Endothelial cell of umbilical vein (primary cell): ENCODE measurements at regions of chr1 and their contacts with region 1.

Region 1: DNA sequence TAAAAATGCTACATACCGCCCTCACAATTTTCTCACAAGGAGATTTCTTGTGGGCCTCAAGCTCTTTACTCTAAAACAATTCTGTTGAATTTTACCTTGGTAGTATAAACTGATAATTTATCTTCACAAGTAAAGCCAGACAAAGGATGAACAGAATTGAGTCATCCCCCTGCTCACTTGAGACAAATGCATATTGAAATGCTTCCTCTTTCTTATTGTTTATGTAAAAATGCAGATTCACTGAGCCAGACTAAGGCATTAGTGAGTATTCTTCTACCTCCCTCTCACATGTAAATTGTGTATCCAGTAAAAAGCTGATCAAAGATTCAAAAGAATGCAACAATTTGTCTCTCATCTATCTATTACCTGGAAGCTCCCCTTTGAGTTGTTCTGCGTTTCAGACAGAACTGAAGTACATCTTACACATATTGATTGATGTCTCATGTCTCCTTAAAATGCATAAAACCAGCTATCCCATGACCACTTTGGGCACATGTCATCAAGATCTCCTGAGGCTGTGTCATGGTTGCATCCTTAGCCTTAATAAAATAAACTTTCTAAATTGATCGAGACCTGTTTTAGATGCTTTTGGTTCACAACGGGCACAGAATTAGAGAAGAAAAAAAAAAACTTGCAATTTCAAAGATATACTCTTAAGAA is 743.1 kb upstream of the B3GALT2 start:
- DNase-seq: no peak
- H3K4me3 ChIP-seq: no peak overlapping the region
- H3K27ac ChIP-seq: no peak overlapping the region
- H3K4me1 ChIP-seq: no peaks in the 10 kb centered on the region
- H3K27me3 ChIP-seq: no peaks in the 10 kb centered on the region
- CTCF ChIP-seq: no peak
- POLR2A ChIP-seq: no peak

Region 2: DNA sequence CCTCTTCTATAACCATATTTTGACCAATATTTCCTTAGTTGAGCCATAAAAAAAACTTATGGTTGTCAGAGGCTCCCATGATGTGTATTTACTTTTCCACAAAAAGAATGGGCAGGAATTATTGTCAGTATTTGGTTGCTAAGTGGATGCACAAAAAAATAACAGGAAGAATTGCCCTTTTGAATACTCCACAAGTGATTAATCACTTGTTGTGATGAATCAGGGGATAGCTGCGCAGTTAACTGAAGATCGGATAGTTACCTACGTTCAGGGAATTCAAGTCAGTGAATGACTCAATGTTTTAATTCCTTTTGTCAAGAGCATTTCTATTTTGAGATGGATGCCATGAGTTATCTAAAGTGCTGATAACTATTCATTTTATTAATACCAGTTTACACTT is 42.1 kb after region 1 on chr1:
- CTCF ChIA-PET with region 1: no interaction called
- POLR2A ChIA-PET with region 1: no interaction called
- dilution Hi-C with region 1: no loop called
- intact Hi-C with region 1: loop called (anchors 2 kb)
- DNase-seq: peak; percentile 55
- H3K4me3 ChIP-seq: no peak overlapping the region
- H3K27ac ChIP-seq: peak overlapping the region; percentile 34
- H3K4me1 ChIP-seq: peaks cover 3% of the 10 kb centered on the region
- H3K27me3 ChIP-seq: no peaks in the 10 kb centered on the region
- CTCF ChIP-seq: no peak
- POLR2A ChIP-seq: no peak

Region 3: DNA sequence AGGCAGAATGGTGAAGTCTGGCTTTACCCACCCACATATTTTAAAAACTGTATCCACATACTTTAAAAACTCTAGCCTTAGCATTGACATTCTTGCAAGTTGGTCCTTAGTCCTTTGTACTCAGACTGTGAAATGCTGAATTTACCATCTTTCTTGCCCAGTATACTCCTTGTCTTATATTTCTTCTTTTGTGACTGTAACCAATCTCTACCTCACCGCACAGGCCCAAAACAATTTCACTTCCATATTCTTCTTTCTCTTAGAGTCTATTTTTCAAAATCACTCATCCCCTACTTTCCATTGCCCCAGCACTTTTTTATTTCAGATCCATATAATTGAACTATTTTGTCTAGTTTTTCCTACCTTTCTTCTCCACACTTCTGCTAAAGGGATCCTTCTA is 149.3 kb after region 1 on chr1:
- CTCF ChIA-PET with region 1: no interaction called
- POLR2A ChIA-PET with region 1: no interaction called
- dilution Hi-C with region 1: no loop called
- intact Hi-C with region 1: no loop called
- DNase-seq: no peak
- H3K4me3 ChIP-seq: no peak overlapping the region
- H3K27ac ChIP-seq: no peak overlapping the region
- H3K4me1 ChIP-seq: no peaks in the 10 kb centered on the region
- H3K27me3 ChIP-seq: no peaks in the 10 kb centered on the region
- CTCF ChIP-seq: no peak
- POLR2A ChIP-seq: no peak